Aorta (tissue), 5 donors: ENCODE measurements at regions of chr10 and their contacts with region 1.

Region 1: DNA sequence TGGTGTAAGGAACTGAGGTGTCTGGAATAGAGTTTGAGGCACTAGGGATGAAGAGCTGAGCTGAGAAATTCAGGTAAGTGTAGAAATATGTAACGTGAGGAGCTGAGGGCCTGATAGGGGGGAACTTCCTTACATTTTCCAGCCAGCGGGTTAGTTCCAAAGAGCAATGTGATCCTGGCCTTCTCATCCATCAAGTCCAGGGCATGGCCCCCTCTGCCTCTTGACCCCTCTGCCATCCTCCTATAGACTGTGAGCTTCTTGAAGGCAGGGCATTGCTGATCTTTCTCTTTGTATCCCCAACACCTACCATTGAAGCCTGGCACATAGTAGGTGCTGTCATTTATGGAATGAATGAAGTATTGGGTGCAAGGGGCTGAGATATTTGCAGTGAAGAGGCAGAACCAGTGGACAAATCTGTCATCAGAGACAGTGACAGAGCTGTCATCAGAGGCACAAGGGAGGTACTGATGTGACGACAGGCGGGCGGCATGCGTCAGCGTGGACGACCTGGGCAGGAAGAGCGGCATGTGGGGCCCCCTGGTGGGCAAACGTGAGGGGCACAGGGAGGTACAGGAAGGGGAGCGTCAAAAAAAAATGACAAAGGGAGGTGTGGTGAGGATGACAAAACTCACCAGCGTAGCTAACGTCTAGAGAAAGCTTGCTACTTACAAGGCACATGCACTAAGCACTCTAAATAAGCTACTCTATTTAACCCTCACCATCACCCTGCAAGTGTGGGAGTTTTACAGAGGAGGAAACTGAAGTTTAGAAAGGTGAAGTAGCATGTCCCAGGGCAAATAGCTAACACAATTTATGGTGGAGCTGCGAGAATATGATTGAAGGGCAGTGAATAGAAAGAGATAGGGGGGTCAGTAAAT is 5.2 kb upstream of the CAMK2G start:
- DNase-seq: peak; percentile 93 to 97
- ATAC-seq: peak; percentile 92
- H3K4me3 ChIP-seq: no peak overlapping the region
- H3K27ac ChIP-seq: peak overlapping the region in 1 of 2 donors; percentile 14
- H3K4me1 ChIP-seq: peaks cover 2% of the 10 kb centered on the region in 2 donors
- H3K27me3 ChIP-seq: no peaks in the 10 kb centered on the region

Region 2: DNA sequence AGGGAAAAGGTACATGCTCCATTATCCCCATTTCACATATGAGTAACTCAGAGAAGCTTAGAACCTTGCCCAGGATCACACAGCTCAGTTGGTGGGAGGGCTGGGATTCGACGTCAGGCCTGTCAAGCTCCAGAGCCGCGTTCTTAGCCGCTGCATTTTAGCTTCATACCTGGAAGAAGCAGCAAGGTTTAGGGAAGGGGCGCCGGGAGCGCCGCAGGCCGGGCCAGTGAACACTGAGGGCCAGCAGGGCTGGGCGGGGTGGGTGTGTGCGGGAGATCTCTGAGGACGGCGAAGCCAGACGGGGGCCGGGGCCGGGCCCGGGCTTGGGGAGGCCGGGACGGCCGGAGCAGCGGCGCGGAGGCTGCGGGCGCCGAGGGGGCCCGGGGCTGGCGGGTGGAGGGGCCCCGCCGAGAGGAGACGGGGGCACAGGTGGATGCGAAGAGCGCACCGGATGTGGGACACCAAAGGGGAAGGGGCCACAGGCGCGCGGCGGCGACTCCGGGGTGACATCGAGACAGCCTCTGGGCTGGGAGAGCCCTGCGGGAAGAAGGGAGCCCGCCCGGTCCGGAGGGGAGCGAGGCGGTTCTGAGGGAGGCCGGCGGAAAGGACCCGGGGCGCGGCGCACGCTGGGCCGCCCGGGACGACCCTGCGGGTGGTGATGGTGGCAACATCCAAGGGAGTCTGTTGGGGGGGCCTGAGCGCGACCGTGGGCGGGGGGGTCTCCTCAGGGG is 68.6 kb before region 1 on chr10:
- intact Hi-C with region 1: no loop called
- DNase-seq: peak; percentile 72 to 85
- ATAC-seq: peak; percentile 53
- H3K4me3 ChIP-seq: peak overlapping the region; percentile 71 to 78
- H3K27ac ChIP-seq: peak overlapping the region; percentile 38 to 70
- H3K4me1 ChIP-seq: no peaks in the 10 kb centered on the region
- H3K27me3 ChIP-seq: no peaks in the 10 kb centered on the region

Region 3: GRCh38 chr10:73837072-73837471 is 42.5 kb before region 1 on chr10:
- intact Hi-C with region 1: no loop called
- DNase-seq: no peak
- ATAC-seq: no peak
- H3K4me3 ChIP-seq: no peak overlapping the region
- H3K27ac ChIP-seq: peak overlapping the region; percentile 66 to 70
- H3K4me1 ChIP-seq: no peaks in the 10 kb centered on the region
- H3K27me3 ChIP-seq: no peaks in the 10 kb centered on the region

Region 4: GRCh38 chr10:73848821-73849489 is 30.6 kb before region 1 on chr10:
- intact Hi-C with region 1: loop called (anchors 1 kb)
- DNase-seq: peak; percentile 90 to 96
- ATAC-seq: peak; percentile 91
- H3K4me3 ChIP-seq: no peak overlapping the region
- H3K27ac ChIP-seq: peak overlapping the region in 1 of 2 donors; percentile 94
- H3K4me1 ChIP-seq: no peaks in the 10 kb centered on the region
- H3K27me3 ChIP-seq: no peaks in the 10 kb centered on the region

Region 5: DNA sequence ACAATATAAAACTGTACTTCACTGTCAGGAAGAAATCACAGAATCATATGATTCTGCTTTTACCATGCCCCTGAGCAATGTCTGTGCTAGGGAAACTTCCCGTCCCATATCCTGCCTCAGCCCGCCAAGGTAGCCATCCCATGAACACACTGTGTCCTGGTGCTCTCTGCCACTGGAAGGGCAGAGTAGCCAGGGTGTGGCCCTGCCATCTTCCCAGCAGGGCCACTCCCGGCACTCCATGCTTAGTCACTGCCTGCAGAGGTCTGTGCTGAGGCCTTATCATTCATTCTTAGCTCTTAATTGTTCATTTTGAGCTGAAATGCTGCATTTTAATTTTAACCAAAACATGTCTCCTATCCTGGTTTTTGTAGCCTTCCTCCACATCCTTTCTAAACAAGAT is 239.3 kb after region 1 on chr10:
- intact Hi-C with region 1: loop called in 1 of 2 experiments (anchors 10 kb)
- DNase-seq: no peak
- ATAC-seq: no peak
- H3K4me3 ChIP-seq: no peak overlapping the region
- H3K27ac ChIP-seq: no peak overlapping the region
- H3K4me1 ChIP-seq: peaks cover 0 to 2% of the 10 kb centered on the region in 2 donors
- H3K27me3 ChIP-seq: no peaks in the 10 kb centered on the region